ENCODE measurements at regions of chr11 and their contacts with region 1.

Region 1: DNA sequence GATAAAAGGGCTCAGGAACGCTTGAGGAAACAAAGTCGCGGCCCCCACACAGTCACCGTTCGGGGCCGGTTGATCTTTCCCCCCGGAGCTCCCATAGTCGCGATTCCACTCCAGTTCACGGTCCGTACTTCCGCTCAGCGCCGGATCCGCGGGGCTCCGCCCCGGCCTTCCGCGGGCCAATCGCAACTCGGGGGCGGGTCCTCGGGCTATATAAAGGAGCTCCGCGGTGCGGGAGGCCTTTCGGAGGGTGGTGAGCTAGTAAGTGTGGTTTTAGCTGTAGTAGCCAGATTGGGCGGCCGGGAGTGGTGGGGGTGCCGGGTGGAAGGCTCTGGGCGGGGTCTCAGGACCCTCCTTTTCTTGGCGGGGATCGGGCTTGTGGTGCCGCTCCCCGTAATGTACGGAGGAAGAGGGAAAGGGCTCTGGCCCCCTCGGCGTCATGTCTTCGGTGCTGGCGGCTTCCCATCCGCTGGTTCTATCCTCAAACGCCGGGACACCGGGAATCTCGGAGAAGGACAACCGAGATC is at the starts of genes C11orf98 and CSKMT:
- DNase-seq: peak; percentile 97
- ATAC-seq: peak; percentile 79
- H3K4me3 Mint-ChIP-seq: peak within 1 kb of the TSS; percentile 97
- H3K27ac Mint-ChIP-seq: peak within 1 kb of the TSS; percentile 95
- H3K4me1 Mint-ChIP-seq: peaks cover 20% of the 10 kb centered on the region
- H3K27me3 Mint-ChIP-seq: no peaks in the 10 kb centered on the region
- CTCF ChIP-seq: no peak
- total RNA-seq, gene C11orf98: 132 to 154 TPM (median 137 TPM) in 3 replicates
- total RNA-seq, gene CSKMT: 60.7 to 75.6 TPM (median 60.9 TPM) in 3 replicates

Region 2: DNA sequence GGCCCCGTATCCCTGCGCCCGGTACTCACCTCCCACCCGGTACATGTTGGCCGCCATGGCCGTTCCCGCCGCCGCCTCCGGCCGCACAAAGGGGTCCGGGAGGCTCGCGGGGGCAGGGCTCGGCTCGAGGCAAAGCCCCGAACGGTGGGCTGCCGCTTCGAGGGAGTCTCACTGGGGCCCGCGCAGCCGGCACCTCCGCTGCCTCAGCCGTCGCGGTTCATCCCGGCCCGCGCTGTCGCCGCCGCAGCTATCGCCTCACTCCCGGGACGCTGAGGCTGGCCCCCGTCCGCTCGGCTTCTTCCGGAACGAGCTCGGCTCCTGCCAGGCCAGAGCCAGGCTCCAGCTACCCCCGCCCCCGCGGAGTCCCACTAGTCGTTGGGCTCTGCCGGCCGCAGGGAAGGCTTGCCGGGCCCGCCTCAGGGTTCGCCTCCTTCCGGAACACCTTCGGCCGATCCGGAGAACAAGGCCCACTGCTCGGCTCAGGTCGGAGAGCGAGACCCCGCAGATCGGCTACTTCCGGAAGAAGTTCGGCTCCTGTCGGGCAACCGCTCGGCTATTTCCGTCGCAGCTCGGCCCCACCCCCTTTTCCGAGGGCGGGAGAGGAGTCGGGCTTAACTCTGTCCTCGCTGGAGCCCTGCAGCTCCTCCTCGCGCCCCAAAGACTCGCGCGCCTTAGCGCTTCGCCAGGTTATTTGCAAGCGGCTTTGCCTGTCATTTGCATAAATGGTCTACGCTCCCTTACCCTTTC is 63.6 kb before region 1 on chr11 and contains the start of gene MTA2:
- CTCF ChIA-PET with region 1: no interaction called
- POLR2A ChIA-PET with region 1: interaction called, 17 read pairs
- DNase-seq: peak; percentile 99
- ATAC-seq: peak; percentile 87
- H3K4me3 Mint-ChIP-seq: peak within 1 kb of the TSS; percentile 91
- H3K27ac Mint-ChIP-seq: peak within 1 kb of the TSS; percentile 98
- H3K4me1 Mint-ChIP-seq: peaks cover 46% of the 10 kb centered on the region
- H3K27me3 Mint-ChIP-seq: peaks cover 26% of the 10 kb centered on the region
- CTCF ChIP-seq: no peak
- total RNA-seq, gene MTA2: 101 to 115 TPM (median 103 TPM) in 3 replicates

Region 3: DNA sequence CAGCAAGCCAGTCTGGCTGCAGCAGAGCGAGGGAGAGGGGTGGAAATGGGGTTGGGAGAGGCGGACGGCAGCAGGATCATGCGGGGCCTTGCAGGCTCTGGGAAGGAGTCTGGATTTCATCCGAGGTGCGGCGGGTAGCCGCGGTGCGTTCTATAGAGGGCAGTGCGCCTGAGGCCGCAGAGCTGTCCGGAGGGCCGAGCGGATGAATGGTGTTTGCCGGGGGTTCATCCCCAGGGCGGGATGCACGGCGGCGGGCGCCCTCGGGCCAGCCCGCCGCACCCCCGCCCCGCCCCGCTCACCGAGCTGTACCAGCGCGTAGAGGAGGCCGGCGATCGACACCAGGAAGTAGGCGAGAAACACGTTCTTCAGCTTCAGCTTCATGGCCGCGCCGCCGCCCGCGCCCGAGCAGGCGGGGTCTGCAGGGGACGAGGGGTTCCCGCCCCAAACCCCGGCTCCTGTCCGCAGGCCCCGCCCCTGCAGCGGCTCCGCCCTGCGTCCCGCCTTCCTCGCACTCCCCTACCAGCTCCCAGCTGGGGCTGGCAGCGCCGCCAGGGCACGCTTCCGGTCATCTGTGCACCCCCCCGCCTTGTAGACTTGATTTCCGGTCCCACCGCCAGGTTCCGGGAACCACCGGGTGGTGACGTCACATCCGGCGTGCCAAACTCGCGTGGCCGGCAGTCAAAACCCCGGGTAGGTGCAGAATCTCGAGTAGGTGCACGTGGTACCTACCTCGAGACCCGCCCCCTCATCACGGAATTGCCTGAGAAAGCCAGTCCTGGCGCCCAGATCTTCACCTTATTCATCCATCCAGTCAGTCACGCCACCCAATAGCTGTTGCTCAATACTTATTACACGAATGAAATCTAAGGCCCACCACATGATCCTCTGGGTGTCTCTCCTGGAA is 43.3 kb before region 1 on chr11 and contains the start of gene B3GAT3:
- CTCF ChIA-PET with region 1: interaction called, 3 read pairs
- POLR2A ChIA-PET with region 1: interaction called, 28 read pairs
- DNase-seq: peak; percentile 99
- ATAC-seq: peak; percentile 97
- H3K4me3 Mint-ChIP-seq: peak within 1 kb of the TSS; percentile 97
- H3K27ac Mint-ChIP-seq: peak within 1 kb of the TSS; percentile 93
- H3K4me1 Mint-ChIP-seq: peaks cover 16% of the 10 kb centered on the region
- H3K27me3 Mint-ChIP-seq: no peaks in the 10 kb centered on the region
- CTCF ChIP-seq: no peak
- total RNA-seq, gene B3GAT3: 41.2 to 43.9 TPM (median 43.3 TPM) in 3 replicates

Region 4: GRCh38 chr11:62652161-62653006 is 12.8 kb before region 1 on chr11:
- CTCF ChIA-PET with region 1: interaction called, 5 read pairs
- POLR2A ChIA-PET with region 1: interaction called, 42 read pairs
- DNase-seq: no peak
- ATAC-seq: no peak
- H3K4me3 Mint-ChIP-seq: peak overlapping the region; percentile 90
- H3K27ac Mint-ChIP-seq: peak overlapping the region; percentile 69
- H3K4me1 Mint-ChIP-seq: peaks cover 8% of the 10 kb centered on the region
- H3K27me3 Mint-ChIP-seq: no peaks in the 10 kb centered on the region
- CTCF ChIP-seq: no peak

Region 5: GRCh38 chr11:62726915-62727763 is 62.0 kb after region 1 on chr11 and contains the start of gene HNRNPUL2:
- CTCF ChIA-PET with region 1: no interaction called
- POLR2A ChIA-PET with region 1: interaction called, 16 read pairs
- DNase-seq: peak; percentile 98
- ATAC-seq: peak; percentile 89
- H3K4me3 Mint-ChIP-seq: peak within 1 kb of the TSS; percentile 98
- H3K27ac Mint-ChIP-seq: peak within 1 kb of the TSS; percentile 100
- H3K4me1 Mint-ChIP-seq: peaks cover 25% of the 10 kb centered on the region
- H3K27me3 Mint-ChIP-seq: peaks cover 4% of the 10 kb centered on the region; the same call in 1 of the 2 replicates
- CTCF ChIP-seq: no peak
- total RNA-seq, gene HNRNPUL2: 42.1 to 42.9 TPM (median 42.2 TPM) in 3 replicates

Region 6: DNA sequence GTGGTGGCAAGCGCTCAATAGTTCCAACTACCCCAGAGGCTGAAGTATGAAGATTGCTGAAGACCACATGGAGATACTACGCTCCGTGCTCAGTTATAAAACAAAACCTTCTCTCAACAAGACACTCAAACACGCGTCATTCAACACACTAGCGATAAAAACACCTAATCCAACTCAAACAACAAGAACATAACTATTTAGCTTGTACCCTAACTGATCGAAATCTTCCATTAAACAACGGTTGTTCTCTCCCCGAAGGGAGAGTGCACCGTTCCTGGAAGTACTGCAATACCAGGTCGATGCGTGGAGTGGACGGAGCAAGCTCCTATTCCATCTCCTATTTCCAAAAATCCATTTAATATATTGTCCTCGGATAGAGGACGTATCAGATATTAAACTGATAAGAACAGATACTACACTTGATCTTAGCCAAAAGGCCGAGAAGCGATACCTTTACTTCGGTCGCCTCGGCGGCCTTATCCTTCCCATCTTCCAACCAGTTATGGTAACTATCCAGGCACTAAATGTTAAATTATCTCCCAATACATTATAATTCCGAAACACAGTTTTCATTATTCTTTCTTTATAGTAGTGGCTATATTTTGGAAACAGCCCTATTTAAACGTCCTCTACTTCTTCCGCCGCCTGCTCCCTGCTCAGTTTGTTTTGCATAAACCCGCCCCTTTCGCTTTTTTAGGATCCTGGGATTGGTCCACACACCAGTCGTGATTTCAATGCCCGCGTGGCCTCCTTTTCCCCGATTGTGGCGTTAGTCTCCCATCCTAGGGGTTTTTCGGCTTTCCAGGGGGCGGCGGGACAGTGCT is 176.4 kb after region 1 on chr11:
- CTCF ChIA-PET with region 1: no interaction called
- POLR2A ChIA-PET with region 1: interaction called, 11 read pairs
- DNase-seq: peak; percentile 87
- ATAC-seq: peak; percentile 77
- H3K4me3 Mint-ChIP-seq: no peak overlapping the region
- H3K27ac Mint-ChIP-seq: no peak overlapping the region
- H3K4me1 Mint-ChIP-seq: peaks cover 15% of the 10 kb centered on the region
- H3K27me3 Mint-ChIP-seq: no peaks in the 10 kb centered on the region
- CTCF ChIP-seq: no peak

Region 7: GRCh38 chr11:63352144-63352543 is 687.0 kb after region 1 on chr11:
- CTCF ChIA-PET with region 1: no interaction called
- POLR2A ChIA-PET with region 1: no interaction called
- DNase-seq: no peak
- ATAC-seq: no peak
- H3K4me3 Mint-ChIP-seq: no peak overlapping the region
- H3K27ac Mint-ChIP-seq: no peak overlapping the region
- H3K4me1 Mint-ChIP-seq: no peaks in the 10 kb centered on the region
- H3K27me3 Mint-ChIP-seq: peaks cover 36% of the 10 kb centered on the region
- CTCF ChIP-seq: no peak

Measured in WTC11 (cell line).